PC-3 (cell line): ENCODE measurements at regions of chr6 and their contacts with region 1.

Region 1: GRCh38 chr6:95593025-95593424 is 15.7 kb downstream of the MANEA start:
- DNase-seq: peak; percentile 77
- ATAC-seq: peak; percentile 95
- H3K4me3 ChIP-seq: no peak overlapping the region
- H3K27ac ChIP-seq: no peak overlapping the region
- H3K4me1 ChIP-seq: peaks cover 24% of the 10 kb centered on the region
- H3K27me3 ChIP-seq: no peaks in the 10 kb centered on the region
- CTCF ChIP-seq: no peak

Region 2: GRCh38 chr6:95577304-95578105 is 15.5 kb before region 1 on chr6 and contains the start of gene MANEA:
- CTCF ChIA-PET with region 1: no interaction called
- POLR2A ChIA-PET with region 1: no interaction called
- intact Hi-C with region 1: loop called (anchors 2 kb)
- DNase-seq: peak; percentile 57
- ATAC-seq: peak; percentile 80
- H3K4me3 ChIP-seq: peak within 1 kb of the TSS; percentile 96
- H3K27ac ChIP-seq: peak within 1 kb of the TSS; percentile 72
- H3K4me1 ChIP-seq: peaks cover 8% of the 10 kb centered on the region; the same call in 1 of the 2 replicates
- H3K27me3 ChIP-seq: no peaks in the 10 kb centered on the region
- CTCF ChIP-seq: no peak
- total RNA-seq, gene MANEA: 4.6 and 7.0 TPM in 2 replicates